ENCODE measurements at regions of chr1 and their contacts with region 1.

Region 1: DNA sequence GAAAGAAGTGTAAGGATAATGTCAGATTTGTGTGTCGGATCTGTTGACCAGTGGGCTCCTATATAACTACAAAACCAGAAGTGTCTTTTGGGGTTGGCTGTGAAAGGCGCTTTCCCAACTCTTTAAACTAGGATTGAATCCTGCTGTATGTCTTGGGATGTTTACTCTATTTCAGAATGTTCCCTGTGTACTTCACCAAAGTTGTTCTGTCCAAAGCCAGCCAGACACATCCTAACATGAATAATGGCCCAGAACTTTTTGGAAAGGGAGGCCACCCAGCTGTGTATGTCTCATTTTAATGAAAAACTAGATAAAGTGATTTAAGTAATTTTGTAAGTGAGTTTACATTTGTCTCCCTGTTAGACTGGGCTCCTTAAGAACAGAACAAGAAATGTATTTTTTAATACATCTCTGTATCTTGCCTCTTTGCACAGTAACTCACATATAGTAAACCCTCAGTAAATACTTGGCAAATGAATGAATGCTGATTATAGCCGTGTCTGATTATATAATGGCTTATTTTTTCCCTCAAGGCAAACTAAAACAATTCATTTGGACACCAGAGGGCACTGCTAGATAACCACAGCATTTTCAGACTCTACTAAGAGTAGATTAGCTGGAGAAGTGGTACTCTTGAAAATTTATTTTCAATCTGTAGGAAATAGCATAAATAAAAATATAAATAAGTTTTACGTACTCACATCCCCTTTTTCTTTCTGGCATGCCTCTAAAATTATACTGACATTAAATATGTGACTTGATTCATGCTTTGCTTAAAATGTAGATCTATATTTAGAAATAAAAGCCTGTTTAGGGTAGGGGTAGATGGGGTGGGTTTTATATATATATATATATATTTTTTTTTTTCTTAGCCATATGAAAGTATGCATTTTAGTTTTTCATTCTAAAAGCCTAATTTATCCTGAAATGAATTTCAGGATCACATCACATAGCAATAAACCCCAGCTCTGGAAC is 23.8 kb downstream of the TSEN15 start:
- DNase-seq: peak; percentile 38
- H3K4me3 ChIP-seq: no peak overlapping the region
- H3K27ac ChIP-seq: no peak overlapping the region
- H3K4me1 ChIP-seq: no peaks in the 10 kb centered on the region
- H3K27me3 ChIP-seq: no peaks in the 10 kb centered on the region
- CTCF ChIP-seq: peak; percentile 44

Region 2: DNA sequence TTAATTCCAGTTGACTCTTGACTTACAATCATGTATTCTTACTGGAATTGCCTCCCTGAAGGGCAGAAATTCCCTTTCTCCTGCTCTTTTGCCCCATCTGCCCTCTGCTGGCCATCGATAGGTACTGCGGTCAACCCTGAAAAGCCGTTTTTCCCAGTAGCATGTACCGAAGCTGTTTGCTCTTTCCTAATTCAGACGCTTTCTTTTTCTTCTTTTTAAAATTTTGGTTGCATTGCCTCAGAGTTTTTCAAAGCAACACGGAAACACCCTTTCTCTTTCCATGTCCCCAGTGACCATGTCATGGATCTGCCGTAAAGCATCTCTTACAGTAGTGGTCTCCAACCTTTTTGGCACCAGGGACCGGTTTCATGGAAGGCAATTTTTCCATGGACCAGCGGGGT is 147.3 kb after region 1 on chr1:
- intact Hi-C with region 1: loop called (anchors 5 kb)
- DNase-seq: peak; percentile 60
- H3K4me3 ChIP-seq: no peak overlapping the region
- H3K27ac ChIP-seq: no peak overlapping the region
- H3K4me1 ChIP-seq: no peaks in the 10 kb centered on the region
- H3K27me3 ChIP-seq: no peaks in the 10 kb centered on the region
- CTCF ChIP-seq: peak; percentile 94

Region 3: GRCh38 chr1:184366997-184367396 is 291.7 kb after region 1 on chr1:
- intact Hi-C with region 1: no loop called
- DNase-seq: no peak
- H3K4me3 ChIP-seq: no peak overlapping the region
- H3K27ac ChIP-seq: no peak overlapping the region
- H3K4me1 ChIP-seq: peaks cover 8% of the 10 kb centered on the region
- H3K27me3 ChIP-seq: no peaks in the 10 kb centered on the region
- CTCF ChIP-seq: no peak

Region 4: DNA sequence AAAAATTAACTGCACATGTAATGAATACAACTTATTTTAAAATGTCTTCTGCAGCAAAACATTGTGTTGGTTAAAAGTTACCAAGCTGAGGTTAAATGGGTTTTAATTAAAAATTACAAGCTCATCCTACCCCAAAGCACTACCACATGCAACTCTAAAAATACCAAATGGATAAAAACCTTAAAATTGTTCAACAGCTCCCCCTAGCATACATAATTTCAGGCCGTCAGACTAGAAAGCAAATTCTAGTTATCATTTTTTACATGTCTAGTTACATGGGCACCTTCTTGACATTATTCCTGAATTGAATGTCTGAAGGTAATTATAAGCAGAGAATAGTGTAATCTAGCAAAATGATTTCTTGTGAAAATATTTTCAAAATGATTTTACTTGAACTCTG is 488.0 kb after region 1 on chr1:
- intact Hi-C with region 1: loop called (anchors 5 kb)
- DNase-seq: no peak
- H3K4me3 ChIP-seq: no peak overlapping the region
- H3K27ac ChIP-seq: no peak overlapping the region
- H3K4me1 ChIP-seq: peaks cover under 1% of the 10 kb centered on the region
- H3K27me3 ChIP-seq: no peaks in the 10 kb centered on the region
- CTCF ChIP-seq: peak; percentile 46

Region 5: GRCh38 chr1:184664042-184664655 is 588.8 kb after region 1 on chr1:
- intact Hi-C with region 1: loop called (anchors 10 kb)
- DNase-seq: peak; percentile 83
- H3K4me3 ChIP-seq: peak overlapping the region; percentile 32
- H3K27ac ChIP-seq: no peak overlapping the region
- H3K4me1 ChIP-seq: no peaks in the 10 kb centered on the region
- H3K27me3 ChIP-seq: no peaks in the 10 kb centered on the region
- CTCF ChIP-seq: peak; percentile 83

Region 6: DNA sequence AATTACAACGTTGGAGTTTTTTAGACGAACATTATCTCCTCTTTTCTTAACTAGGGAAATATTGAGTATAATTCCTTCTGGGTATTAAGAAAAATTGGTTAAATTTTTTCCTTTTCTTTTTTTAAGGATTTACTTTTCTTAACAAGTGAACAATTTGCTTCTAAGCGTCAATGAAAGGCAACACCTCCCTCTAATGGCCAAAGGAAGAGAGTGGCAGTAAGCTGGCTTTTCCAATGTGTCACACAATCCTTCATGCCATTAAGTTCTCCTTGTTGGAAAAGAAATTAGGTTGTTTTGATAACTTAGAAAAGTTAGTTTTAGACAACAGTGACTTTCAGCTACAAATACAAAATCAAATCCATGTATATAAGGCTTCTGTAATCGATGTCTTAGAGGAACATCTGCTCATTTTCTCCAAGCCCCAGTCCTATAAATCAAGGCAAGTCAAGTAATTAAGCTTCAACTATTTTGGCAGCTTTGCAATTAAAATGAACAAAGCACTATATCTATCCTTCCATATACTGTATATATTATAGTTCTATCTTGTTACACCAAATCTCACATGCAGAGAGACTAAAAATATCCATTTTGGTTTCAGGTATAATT is 616.5 kb after region 1 on chr1:
- intact Hi-C with region 1: loop called (anchors 5 kb)
- DNase-seq: no peak
- H3K4me3 ChIP-seq: no peak overlapping the region
- H3K27ac ChIP-seq: no peak overlapping the region
- H3K4me1 ChIP-seq: no peaks in the 10 kb centered on the region
- H3K27me3 ChIP-seq: no peaks in the 10 kb centered on the region
- CTCF ChIP-seq: peak; percentile 78

Measured in colonic mucosa (tissue), 4 donors.